ENCODE measurements at regions of chr12 and their contacts with region 1.

Region 1: DNA sequence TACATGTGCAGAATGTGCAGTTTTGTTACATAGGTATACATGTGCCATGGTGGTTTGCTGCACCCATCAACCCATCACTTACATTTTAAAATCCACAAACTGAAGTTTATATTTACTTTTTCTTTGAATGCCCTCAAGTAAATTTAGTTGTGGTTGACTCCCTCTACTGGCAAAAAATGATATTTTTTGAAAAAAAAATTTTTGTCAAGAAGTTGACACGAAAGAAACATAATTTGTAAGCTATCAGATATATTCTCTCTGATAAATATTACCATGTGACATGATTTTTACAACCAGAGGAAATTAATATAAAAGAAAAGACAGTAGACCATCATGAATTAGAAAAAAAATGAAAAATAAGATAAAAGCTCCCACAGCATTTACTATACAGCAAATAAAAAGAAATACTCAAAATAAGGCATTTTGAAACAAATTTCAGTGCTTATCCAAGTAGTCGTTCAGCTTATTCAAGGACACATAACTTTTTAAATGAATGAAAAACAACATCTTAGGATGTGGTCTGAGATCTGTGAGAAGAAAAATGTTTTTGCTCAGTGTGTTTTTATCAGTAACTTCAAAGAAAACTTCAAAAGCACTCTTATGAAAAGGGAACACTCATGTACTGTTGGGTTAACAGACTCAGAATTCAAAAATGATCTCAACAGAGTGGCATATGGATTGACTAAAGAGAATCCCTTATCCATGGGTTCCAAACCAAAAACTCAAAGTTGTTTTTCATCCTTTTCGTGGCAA is 30.0 kb upstream of the GRIP1 start:
- DNase-seq: no peak
- CTCF ChIP-seq: peak; percentile 32

Region 2: DNA sequence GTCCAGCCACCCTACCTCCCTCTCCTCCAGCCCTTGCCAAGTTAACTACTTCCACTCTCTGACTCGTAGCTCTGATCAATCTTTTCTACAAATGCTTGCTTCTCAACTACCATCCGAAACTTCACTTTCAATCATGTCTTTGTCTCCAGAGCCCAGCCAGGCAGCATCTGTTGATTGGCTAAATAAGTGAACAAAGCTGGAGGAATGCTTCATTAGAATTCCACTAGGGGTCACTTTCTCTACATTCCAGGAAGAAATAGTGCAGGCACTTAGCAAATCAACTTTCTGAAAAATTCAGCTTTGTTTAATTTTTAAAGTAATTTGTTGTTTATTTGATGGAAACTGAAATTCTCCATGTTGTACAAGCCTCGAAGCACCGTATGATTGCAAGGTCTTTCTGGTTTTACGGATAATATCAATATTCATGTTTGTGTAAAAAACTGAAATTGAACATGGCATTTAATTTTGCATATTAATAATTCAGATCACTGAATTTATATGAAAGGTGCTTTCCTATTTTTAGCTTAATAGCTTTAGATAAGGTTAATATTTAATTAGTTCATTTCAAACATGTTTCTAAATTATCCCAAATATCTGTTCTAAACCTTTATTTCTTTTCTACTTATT is 439.0 kb before region 1 on chr12:
- CTCF ChIA-PET with region 1: interaction called, 12 read pairs
- POLR2A ChIA-PET with region 1: no interaction called
- DNase-seq: peak; percentile 37
- CTCF ChIP-seq: peak; percentile 37

Region 3: DNA sequence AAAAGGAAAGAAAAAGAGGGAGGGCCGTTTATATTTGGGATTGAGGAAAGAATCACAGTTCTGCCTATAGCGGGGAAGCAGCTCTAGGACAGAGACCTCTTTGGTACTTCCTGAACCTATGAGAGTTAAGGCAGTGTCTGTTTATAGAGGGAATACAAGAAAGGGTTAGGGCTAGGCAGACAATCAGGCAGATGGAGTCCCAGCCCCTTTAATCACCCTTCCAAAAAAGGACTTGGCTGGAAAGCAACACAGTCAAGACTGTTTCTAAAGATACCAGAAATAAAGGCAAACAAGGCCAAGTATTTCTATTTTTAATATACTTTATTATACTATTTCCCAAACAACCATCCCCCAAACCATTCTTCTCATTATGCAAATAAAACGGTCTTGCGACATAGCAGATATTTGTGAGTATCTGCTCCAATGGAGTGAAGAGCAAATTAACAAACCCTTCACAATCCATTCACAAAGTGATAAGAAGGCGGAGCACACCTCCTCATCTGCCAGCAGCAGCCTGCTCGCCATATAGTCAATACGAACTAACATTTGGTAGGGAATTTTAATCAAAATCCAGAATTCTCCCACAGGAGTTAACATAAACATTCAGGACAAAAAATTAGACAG is 29.3 kb before region 1 on chr12:
- CTCF ChIA-PET with region 1: interaction called, 11 read pairs
- POLR2A ChIA-PET with region 1: no interaction called
- DNase-seq: no peak
- CTCF ChIP-seq: no peak

Region 4: DNA sequence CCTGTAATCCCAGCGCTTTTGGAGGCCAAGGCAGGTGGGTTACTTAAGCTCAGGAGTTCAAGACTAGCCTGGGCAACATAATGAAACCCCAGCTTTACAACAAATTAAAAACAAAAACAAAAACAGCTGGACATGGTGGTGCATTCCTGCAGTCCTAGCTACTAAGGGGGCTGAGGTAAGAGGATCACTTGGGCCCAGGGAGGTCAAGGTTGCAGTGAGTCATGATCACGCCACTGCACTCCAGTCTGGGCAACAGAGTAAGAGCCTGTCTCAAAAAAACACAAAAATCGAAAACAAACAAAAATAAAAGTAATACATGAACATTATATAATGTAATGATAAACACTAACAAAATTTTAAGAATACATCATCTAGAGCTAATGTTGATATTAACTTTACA is 16.2 kb after region 1 on chr12:
- CTCF ChIA-PET with region 1: interaction called, 15 read pairs
- POLR2A ChIA-PET with region 1: no interaction called
- DNase-seq: no peak
- CTCF ChIP-seq: no peak

Region 5: DNA sequence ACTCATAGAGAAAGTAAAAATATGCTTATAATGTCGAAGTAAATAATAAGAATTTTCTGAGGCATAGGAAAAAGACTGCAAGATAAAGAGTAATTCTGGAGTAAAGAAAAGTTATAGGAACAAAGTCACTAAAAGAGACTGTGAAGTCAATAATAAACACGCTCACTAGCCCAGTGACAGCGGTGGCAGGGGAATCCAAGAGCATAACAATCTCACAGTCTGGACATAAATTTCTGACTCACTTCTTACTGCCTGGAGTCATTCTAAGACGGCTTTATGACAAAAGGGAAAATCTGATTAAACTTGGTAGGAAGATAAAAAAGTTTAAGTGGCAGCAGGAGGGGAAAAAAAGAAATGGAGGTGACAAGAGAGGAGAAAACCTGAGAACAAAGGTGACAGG is 26.4 kb after region 1 on chr12:
- CTCF ChIA-PET with region 1: no interaction called
- POLR2A ChIA-PET with region 1: no interaction called
- DNase-seq: no peak
- CTCF ChIP-seq: no peak

Measured in GM10248 (cell line).